Endothelial cell of umbilical vein (primary cell): ENCODE measurements at regions of chr12 and their contacts with region 1.

Region 1: GRCh38 chr12:101697197-101697929 is at the start of gene CHPT1:
- DNase-seq: peak; percentile 50
- H3K4me3 ChIP-seq: peak within 1 kb of the TSS; percentile 72 to 82 (median 81)
- H3K27ac ChIP-seq: peak within 1 kb of the TSS; percentile 19
- H3K4me1 ChIP-seq: peaks cover 6% of the 10 kb centered on the region
- H3K27me3 ChIP-seq: no peaks in the 10 kb centered on the region
- CTCF ChIP-seq: no peak
- POLR2A ChIP-seq: no peak
- total RNA-seq, gene CHPT1: 19.3 and 25.3 TPM in 2 replicates

Region 2: DNA sequence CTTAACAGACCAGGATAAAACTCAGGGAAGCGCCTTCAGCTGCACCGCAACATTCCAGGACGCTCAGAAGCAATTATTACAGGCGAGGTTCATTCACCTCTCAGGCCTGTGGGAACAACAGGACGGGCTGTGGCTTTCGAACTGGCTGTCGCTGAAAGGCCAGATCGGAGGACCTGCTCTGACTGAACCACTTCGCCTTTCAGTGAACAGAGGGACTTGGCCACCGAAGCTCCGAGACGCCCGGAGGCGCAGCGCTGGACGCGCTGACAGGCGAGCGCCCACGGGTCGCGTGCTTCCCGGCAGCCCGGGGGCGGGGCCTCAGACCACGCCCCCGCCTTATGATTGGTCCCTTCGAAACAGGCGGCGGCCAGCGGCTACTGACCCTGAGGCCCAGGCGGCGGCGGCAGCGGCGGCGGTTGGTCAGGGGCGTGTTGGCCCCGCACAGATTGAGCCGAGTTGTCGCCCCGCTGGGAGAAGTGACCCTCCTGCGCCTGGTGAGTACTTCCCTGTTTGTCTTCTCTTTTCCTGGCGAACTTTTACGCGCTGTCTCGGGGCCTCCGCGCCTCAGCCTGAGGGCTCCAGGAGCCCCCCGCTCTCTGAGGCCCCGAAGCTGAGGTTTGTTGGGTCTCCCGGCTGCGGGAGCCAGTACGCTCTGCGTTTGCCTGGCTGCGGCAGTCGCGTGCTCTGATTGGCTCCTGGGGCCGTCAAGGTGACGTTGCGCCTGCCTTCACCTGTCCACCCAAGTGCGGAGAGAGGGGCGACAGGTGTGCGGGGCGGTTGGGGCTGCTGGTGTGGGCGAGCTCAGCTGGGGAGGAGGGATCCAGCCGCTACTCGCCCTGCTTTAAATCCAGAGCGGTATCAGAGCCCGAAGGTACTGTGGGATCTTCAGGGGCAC is 1123.8 kb before region 1 on chr12 and contains the start of gene GAS2L3:
- CTCF ChIA-PET with region 1: no interaction called
- POLR2A ChIA-PET with region 1: no interaction called
- dilution Hi-C with region 1: no loop called
- intact Hi-C with region 1: loop called (anchors 10 kb)
- DNase-seq: peak; percentile 93
- H3K4me3 ChIP-seq: peak within 1 kb of the TSS; percentile 24 to 89 (median 87)
- H3K27ac ChIP-seq: peak within 1 kb of the TSS; percentile 79
- H3K4me1 ChIP-seq: peaks cover 34% of the 10 kb centered on the region
- H3K27me3 ChIP-seq: peaks cover 1 to 2% of the 10 kb centered on the region in 2 experiments
- CTCF ChIP-seq: no peak
- POLR2A ChIP-seq: peak; percentile 40
- total RNA-seq, gene GAS2L3: 39.9 and 47.1 TPM in 2 replicates

Region 3: GRCh38 chr12:101407436-101408345 is 289.7 kb before region 1 on chr12 and contains the start of gene ARL1:
- CTCF ChIA-PET with region 1: no interaction called
- POLR2A ChIA-PET with region 1: no interaction called
- dilution Hi-C with region 1: no loop called
- intact Hi-C with region 1: loop called (anchors 5 kb)
- DNase-seq: peak; percentile 91
- H3K4me3 ChIP-seq: peak within 1 kb of the TSS; percentile 39 to 88 (median 71)
- H3K27ac ChIP-seq: peak within 1 kb of the TSS; percentile 99
- H3K4me1 ChIP-seq: peaks cover 13% of the 10 kb centered on the region
- H3K27me3 ChIP-seq: peaks cover 0 to 4% of the 10 kb centered on the region in 2 experiments
- CTCF ChIP-seq: no peak
- POLR2A ChIP-seq: peak; percentile 66
- total RNA-seq, gene ARL1: 65.4 and 76.5 TPM in 2 replicates